A549 (cell line): ENCODE measurements at regions of chr1 and their contacts with region 1.

Region 1: DNA sequence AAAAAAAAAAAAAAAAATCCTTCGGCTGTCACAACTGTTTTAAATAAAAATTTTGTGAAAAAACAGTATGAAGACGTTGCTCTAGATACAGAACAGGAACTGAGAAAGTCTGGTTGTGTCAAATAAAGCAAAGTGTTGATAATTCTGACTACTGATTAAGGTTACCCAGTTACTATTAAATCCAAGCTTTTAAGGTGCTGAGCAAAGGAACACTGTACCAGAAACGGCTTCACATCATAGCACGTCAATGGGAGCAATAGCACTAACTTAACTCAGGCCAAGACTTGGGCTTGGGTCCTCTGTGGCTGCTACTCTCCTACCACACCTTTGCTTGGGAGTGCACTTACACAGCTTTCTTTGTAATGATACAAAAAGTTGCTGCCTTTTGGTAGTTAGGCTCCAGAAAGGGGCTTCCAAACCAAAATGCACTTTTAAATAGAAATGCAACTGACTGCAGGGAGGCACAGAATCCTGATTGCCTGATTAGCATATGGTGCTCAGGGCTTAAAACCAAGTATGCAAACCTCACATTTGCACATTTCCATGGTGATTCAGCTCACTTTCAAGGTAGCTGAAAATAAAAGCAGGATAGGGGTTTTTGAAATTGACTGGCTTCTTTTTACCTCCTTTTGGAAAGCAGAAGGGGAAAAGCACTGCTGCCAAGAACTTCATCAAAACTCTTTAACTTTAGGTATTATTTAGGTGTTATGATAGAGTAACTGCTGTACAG is 6.3 kb downstream of the MCL1 start:
- DNase-seq: no peak
- ATAC-seq: no peak
- H3K4me3 ChIP-seq: no peak overlapping the region
- H3K27ac ChIP-seq: peak overlapping the region; percentile 12 to 45; a peak in 3 of 6 replicates
- H3K4me1 ChIP-seq: peaks cover 82% of the 10 kb centered on the region
- CTCF ChIP-seq: no peak
- EP300 ChIP-seq: no peak
- POLR2A ChIP-seq: no peak
- RAD21 ChIP-seq: no peak

Region 2: DNA sequence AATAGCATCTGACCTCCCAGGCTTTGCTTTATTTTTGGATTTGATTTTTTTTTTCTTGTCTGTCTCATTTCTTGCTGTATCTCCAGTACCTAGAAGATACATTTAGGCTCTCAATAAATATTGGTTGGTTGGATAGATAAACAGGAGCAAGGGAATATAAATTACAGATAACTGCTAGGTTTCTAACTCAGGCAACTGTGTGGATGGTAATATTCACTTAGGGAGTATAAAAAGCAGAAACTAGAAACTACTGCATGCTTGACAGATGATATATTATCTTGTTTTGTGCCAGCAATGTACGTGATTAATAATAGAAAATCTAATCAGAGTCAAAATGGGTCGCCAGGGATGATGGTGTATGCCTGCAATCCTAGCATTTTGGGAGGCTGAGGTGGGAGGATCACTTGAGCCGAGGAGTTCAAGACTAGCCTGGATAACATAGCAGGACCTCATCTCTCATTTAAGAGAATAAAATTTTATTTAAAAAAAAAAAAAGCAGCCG is 116.9 kb before region 1 on chr1:
- CTCF ChIA-PET with region 1: no interaction called
- POLR2A ChIA-PET with region 1: no interaction called
- DNase-seq: no peak
- ATAC-seq: no peak
- H3K4me3 ChIP-seq: no peak overlapping the region
- H3K27ac ChIP-seq: no peak overlapping the region
- H3K4me1 ChIP-seq: no peaks in the 10 kb centered on the region
- CTCF ChIP-seq: no peak
- EP300 ChIP-seq: no peak
- POLR2A ChIP-seq: no peak
- RAD21 ChIP-seq: no peak

Region 3: DNA sequence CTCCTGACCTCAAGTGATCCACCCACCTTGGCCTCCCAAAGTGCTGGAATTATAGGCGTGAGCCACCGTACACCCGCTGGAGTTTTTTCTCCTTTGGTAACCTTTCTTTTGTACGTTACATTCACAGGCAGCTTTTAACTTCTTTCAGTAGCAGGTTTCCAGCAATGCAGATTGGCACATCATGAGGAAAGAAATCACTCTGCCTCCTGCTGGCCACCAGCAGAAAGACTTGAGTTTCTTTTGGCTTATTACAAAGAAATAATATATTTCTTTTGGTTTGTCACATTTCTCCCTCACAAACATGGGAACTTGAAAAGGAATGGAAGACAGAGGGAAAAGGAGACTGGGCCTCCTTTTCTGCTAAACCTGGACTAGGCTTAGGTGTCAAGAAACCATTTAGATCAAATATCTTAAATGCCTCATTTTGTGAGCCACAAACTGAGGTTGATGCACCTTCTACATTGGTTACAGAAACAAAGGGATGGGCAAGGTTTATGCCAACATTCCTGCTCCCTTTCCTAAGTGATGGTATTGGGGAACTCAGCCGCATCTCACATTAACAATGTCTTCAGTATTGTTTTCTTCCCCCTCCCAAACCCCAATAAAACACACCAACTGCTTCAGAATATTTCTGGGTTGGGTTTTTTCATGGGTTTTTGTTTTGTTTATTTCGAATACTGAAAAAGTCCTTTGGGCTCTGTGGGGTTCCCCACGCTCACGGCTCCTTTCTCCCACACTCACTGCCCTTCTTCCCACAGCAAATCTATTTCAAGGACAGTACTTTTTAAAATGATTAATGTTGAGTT is 48.6 kb after region 1 on chr1:
- CTCF ChIA-PET with region 1: interaction called, 210 read pairs
- POLR2A ChIA-PET with region 1: interaction called, 43 read pairs
- DNase-seq: peak; percentile 62 to 64
- ATAC-seq: peak in 1 of 2 experiments; percentile 35; a peak in 2 of 6 replicates
- H3K4me3 ChIP-seq: no peak overlapping the region
- H3K27ac ChIP-seq: peak overlapping the region in 1 of 2 experiments; percentile 50; a peak in 5 of 6 replicates
- H3K4me1 ChIP-seq: peaks cover 16% of the 10 kb centered on the region
- CTCF ChIP-seq: peak; percentile 66
- EP300 ChIP-seq: no peak
- POLR2A ChIP-seq: no peak
- RAD21 ChIP-seq: peak; percentile 60 to 61